ENCODE measurements at regions of chr13 and their contacts with region 1.

Region 1: DNA sequence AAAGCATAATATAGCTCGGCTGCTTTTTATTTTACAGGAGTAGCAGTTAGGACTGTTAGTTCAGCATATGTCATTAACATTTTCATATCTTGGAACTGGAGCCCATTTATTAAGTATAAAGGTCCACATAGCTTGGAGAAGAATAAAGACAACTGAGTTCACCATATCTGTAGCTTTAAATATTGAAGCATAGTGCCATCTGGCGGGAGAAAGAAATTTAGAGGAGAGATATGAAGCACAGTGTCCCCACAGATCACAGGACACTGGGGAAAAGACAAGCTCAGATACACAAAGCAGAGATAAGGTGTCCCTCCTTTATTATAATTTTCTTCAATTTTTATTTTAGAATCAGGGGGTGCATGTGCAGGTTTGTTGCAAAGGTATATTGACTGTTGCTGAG is 104.7 kb upstream of the FREM2 start:
- DNase-seq: peak; percentile 6 to 50 (median 11)
- ATAC-seq: peak; percentile 78
- H3K4me3 ChIP-seq: no peak overlapping the region
- H3K27ac ChIP-seq: no peak overlapping the region
- H3K4me1 ChIP-seq: no peaks in the 10 kb centered on the region
- H3K27me3 ChIP-seq: no peaks in the 10 kb centered on the region
- CTCF ChIP-seq: peak; percentile 30 to 50 (median 32); a peak in 3 of 6 replicates
- EP300 ChIP-seq: no peak
- POLR2A ChIP-seq: no peak
- RAD21 ChIP-seq: peak; percentile 40 to 53

Region 2: DNA sequence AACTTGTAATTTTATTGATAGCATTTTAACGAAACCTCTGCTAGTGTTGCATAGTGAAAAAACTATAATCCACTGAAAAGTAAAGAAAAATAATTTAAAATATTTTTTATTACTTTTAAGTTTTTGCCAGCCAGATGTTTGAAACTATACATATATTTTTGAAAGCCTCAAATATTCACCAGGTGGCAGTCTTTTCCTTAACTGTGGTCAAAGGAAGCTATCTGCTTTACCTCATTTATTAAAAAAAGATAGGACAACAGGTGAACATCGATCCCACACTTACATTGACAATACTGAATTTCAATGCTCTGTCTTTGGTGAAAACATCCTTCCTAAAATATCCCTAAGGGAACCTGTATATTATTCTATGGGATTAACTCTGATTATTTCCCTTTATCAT is 813.1 kb before region 1 on chr13:
- CTCF ChIA-PET with region 1: no interaction called
- POLR2A ChIA-PET with region 1: no interaction called
- in situ Hi-C with region 1: no loop called
- intact Hi-C with region 1: loop called (anchors 5 kb)
- DNase-seq: peak in 2 of 4 experiments; percentile 3 to 8
- ATAC-seq: no peak
- H3K4me3 ChIP-seq: no peak overlapping the region
- H3K27ac ChIP-seq: no peak overlapping the region
- H3K4me1 ChIP-seq: no peaks in the 10 kb centered on the region
- H3K27me3 ChIP-seq: no peaks in the 10 kb centered on the region
- CTCF ChIP-seq: peak in 2 of 3 experiments; percentile 22 to 34; a peak in 2 of 6 replicates
- EP300 ChIP-seq: no peak
- POLR2A ChIP-seq: no peak
- RAD21 ChIP-seq: peak; percentile 28 to 56

Region 3: DNA sequence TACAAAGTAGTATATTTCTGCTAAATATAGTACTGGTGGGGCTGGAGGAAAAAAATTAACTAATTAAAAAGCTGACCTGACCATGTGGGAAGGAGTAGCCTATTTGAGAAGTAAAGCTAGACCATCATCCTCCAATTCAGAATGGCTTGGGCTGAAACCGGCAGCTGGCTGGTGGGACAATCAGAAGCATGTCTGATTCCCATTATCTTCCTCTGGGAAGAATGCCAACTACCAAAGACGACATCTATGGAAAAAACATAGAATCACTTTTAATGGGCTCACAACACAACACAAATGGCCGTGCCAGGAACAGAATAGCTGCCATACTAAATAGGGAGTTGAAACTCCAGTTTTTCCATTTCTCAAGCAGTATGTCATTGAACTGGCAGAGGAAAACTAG is 15.6 kb before region 1 on chr13:
- CTCF ChIA-PET with region 1: no interaction called
- POLR2A ChIA-PET with region 1: no interaction called
- in situ Hi-C with region 1: no loop called
- intact Hi-C with region 1: no loop called
- DNase-seq: no peak
- ATAC-seq: no peak
- H3K4me3 ChIP-seq: no peak overlapping the region
- H3K27ac ChIP-seq: no peak overlapping the region
- H3K4me1 ChIP-seq: no peaks in the 10 kb centered on the region
- H3K27me3 ChIP-seq: no peaks in the 10 kb centered on the region
- CTCF ChIP-seq: no peak
- EP300 ChIP-seq: no peak
- POLR2A ChIP-seq: no peak
- RAD21 ChIP-seq: no peak

Region 4: GRCh38 chr13:38914070-38914469 is 331.9 kb after region 1 on chr13:
- CTCF ChIA-PET with region 1: no interaction called
- POLR2A ChIA-PET with region 1: no interaction called
- in situ Hi-C with region 1: no loop called
- intact Hi-C with region 1: no loop called
- DNase-seq: no peak
- ATAC-seq: no peak
- H3K4me3 ChIP-seq: no peak overlapping the region
- H3K27ac ChIP-seq: no peak overlapping the region
- H3K4me1 ChIP-seq: no peaks in the 10 kb centered on the region
- H3K27me3 ChIP-seq: no peaks in the 10 kb centered on the region
- CTCF ChIP-seq: no peak
- EP300 ChIP-seq: no peak
- POLR2A ChIP-seq: no peak
- RAD21 ChIP-seq: no peak